MCF 10A (cell line): ENCODE measurements at regions of chr9 and their contacts with region 1.

Region 1: DNA sequence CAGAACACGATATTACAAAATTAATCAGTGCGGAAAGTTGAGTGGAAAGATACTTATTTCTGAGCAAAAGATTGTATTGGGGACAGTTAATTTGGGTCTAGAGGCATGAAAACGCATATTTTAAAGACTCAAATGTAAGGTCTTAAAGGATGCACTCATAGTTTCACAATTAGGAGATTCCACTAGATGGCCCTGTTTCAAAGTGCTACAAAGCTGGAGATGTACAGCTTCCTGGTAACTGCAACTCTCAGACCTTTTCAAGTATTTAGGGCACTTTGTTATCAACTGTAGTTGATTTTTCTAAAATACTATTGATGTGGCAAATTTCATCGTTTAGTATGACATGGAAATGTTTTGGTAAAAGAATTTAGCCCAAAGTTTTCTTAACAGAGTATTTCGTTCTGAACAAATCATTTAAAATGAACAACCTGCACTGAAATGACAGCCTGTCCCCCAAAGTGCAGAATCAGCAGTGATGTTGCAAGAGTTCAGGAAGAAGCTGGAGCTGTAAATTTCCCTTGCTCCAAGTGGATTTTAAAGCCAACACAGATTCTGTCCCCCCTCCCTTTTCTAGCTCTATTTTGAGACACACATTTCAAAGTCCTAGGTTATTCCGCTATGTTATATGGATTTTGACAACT is 16.2 kb upstream of the NDUFB6 start:
- DNase-seq: peak; percentile 76
- H3K4me3 Mint-ChIP-seq: no peak overlapping the region
- H3K27ac Mint-ChIP-seq: no peak overlapping the region
- H3K4me1 Mint-ChIP-seq: peaks cover 11% of the 10 kb centered on the region
- H3K27me3 Mint-ChIP-seq: no peaks in the 10 kb centered on the region
- CTCF ChIP-seq: peak; percentile 50

Region 2: DNA sequence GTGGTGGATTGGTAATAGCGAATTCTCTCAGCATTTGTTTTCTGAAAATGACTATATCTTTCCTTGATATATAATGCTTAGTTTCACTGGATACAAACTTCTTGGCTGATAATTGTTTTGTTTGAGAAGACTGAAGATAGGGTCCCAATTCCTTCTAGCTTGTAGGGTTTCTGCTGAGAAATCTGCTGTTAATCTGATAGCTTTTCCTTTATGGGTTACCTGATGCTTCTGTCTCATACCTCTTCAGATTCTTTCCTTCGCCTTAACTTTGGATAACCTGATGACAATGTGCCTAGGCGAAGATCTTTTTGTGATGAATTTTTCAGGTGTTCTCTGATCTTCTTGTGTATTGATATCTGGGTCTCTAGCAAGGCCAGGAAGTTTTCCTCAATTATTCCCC is 299.4 kb before region 1 on chr9:
- CTCF ChIA-PET with region 1: no interaction called
- POLR2A ChIA-PET with region 1: no interaction called
- intact Hi-C with region 1: no loop called
- DNase-seq: no peak
- H3K4me3 Mint-ChIP-seq: no peak overlapping the region
- H3K27ac Mint-ChIP-seq: no peak overlapping the region
- H3K4me1 Mint-ChIP-seq: no peaks in the 10 kb centered on the region
- H3K27me3 Mint-ChIP-seq: peaks cover 80% of the 10 kb centered on the region
- CTCF ChIP-seq: no peak

Region 3: GRCh38 chr9:32508728-32509127 is 80.5 kb before region 1 on chr9:
- CTCF ChIA-PET with region 1: no interaction called
- POLR2A ChIA-PET with region 1: no interaction called
- intact Hi-C with region 1: no loop called
- DNase-seq: no peak
- H3K4me3 Mint-ChIP-seq: no peak overlapping the region
- H3K27ac Mint-ChIP-seq: no peak overlapping the region
- H3K4me1 Mint-ChIP-seq: no peaks in the 10 kb centered on the region
- H3K27me3 Mint-ChIP-seq: no peaks in the 10 kb centered on the region
- CTCF ChIP-seq: no peak

Region 4: DNA sequence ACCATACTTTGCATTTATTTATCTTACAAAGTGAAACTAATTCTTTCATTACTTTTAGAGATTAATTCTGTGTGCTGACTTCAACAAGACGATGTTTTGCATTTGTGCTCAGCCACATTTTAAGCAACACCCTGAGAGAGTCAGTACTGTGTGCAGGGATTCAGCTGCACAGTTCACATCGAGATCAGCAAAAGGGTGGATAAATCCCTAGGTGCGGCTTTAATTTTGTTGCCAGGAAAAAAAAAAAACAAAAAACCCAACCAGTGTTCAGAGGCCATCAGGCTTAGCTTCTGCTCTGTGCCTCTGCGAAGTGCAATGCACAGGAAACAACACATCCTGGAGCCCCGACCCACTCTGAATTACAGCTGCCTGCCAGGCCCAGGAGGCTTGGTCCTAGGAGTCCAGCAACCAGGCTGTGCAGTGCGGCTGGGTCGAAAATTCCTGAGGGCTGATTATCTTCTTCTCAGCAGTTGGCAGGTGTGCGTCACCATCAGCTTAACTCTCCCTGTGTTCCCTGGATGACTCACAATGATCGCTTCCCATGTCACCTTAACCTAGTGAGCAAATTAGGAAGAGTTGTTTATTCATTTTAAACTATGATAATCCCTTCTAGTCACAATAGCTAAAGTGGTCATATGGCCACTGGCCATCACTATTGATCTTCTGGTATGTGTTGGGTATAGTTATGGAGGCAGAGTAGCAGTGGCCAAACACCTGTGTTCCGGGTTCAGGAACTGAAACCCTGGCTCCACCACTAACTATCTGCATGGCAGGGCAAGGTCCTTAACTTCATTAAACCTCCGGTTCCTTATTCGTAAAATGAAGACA is 14.9 kb after region 1 on chr9:
- CTCF ChIA-PET with region 1: interaction called, 28 read pairs
- POLR2A ChIA-PET with region 1: interaction called, 7 read pairs
- intact Hi-C with region 1: no loop called
- DNase-seq: peak; percentile 93
- H3K4me3 Mint-ChIP-seq: peak overlapping the region; percentile 24
- H3K27ac Mint-ChIP-seq: peak overlapping the region; percentile 11
- H3K4me1 Mint-ChIP-seq: peaks cover 8% of the 10 kb centered on the region
- H3K27me3 Mint-ChIP-seq: no peaks in the 10 kb centered on the region
- CTCF ChIP-seq: no peak

Region 5: GRCh38 chr9:32703635-32704034 is 114.4 kb after region 1 on chr9:
- CTCF ChIA-PET with region 1: interaction called, 11 read pairs
- POLR2A ChIA-PET with region 1: interaction called, 5 read pairs
- intact Hi-C with region 1: loop called (anchors 1 kb)
- DNase-seq: peak; percentile 49
- H3K4me3 Mint-ChIP-seq: no peak overlapping the region
- H3K27ac Mint-ChIP-seq: no peak overlapping the region
- H3K4me1 Mint-ChIP-seq: peaks cover 38% of the 10 kb centered on the region
- H3K27me3 Mint-ChIP-seq: no peaks in the 10 kb centered on the region
- CTCF ChIP-seq: no peak

Region 6: DNA sequence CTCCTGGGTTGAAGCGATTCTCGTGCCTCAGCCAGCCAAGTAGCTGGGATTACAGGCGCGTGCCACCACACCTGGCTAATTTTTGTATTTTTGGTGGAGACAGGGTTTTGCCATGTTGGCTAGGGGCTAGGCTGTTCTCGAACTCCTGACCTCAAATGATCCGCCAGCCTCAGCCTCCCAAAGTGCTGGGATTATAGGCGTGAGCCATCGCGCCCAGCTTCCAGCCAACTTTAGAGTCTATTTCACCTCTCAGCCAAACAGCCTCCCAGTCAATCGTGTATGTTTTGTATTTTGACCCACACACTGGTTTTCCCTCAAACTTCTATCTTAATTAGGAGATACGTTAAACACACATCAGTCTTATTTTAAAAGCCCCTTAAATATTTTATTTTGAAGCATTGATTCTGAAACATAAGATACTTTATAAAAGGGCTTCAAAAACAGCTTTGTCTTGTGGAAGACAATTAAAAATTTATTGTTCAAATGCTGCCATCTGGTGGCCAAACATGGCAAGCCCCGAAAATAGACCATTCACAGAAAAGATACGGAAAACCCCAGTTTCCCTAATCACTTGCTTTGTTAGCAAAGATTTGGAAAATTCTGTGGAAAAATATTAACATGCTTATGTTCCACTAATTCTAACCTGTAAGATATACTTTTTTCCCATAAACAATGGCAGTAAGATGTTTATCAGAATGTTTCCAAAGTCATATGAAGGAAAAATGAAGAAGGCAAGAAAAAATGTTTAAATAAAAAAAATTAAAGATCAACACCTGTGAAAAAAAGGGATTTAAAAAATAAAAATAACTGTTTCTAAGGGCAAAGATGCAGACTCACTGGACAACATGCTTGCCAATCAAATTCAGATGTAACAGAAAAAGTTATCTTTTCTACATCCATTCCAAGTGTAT is 379.2 kb after region 1 on chr9:
- CTCF ChIA-PET with region 1: interaction called, 264 read pairs
- POLR2A ChIA-PET with region 1: interaction called, 28 read pairs
- intact Hi-C with region 1: loop called (anchors 1 kb)
- DNase-seq: peak; percentile 59
- H3K4me3 Mint-ChIP-seq: no peak overlapping the region
- H3K27ac Mint-ChIP-seq: no peak overlapping the region
- H3K4me1 Mint-ChIP-seq: no peaks in the 10 kb centered on the region
- H3K27me3 Mint-ChIP-seq: no peaks in the 10 kb centered on the region
- CTCF ChIP-seq: peak; percentile 54

Region 7: DNA sequence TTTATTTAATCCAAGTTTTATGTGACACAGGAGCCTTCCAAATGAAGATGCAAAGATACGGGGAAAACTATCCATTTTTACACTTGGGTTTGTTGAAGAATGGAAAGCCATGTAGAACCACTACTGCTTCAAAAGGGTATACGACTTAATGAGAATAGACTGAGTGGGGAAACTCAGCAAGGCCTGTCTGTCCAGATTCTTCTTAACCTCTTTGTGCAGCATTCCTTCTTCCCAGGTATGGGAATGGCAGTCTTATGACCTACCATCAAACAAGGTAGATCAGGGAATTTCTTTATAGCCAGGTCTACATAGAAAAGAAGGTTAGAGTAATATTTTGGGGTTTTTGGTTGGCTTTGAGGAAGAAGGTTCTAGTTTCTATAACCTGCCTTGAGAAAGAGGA is 388.8 kb after region 1 on chr9:
- CTCF ChIA-PET with region 1: interaction called, 264 read pairs
- POLR2A ChIA-PET with region 1: no interaction called
- intact Hi-C with region 1: no loop called
- DNase-seq: no peak
- H3K4me3 Mint-ChIP-seq: no peak overlapping the region
- H3K27ac Mint-ChIP-seq: peak overlapping the region; percentile 23
- H3K4me1 Mint-ChIP-seq: no peaks in the 10 kb centered on the region
- H3K27me3 Mint-ChIP-seq: no peaks in the 10 kb centered on the region
- CTCF ChIP-seq: no peak